ENCODE measurements at regions of chr12 and their contacts with region 1.

Region 1: DNA sequence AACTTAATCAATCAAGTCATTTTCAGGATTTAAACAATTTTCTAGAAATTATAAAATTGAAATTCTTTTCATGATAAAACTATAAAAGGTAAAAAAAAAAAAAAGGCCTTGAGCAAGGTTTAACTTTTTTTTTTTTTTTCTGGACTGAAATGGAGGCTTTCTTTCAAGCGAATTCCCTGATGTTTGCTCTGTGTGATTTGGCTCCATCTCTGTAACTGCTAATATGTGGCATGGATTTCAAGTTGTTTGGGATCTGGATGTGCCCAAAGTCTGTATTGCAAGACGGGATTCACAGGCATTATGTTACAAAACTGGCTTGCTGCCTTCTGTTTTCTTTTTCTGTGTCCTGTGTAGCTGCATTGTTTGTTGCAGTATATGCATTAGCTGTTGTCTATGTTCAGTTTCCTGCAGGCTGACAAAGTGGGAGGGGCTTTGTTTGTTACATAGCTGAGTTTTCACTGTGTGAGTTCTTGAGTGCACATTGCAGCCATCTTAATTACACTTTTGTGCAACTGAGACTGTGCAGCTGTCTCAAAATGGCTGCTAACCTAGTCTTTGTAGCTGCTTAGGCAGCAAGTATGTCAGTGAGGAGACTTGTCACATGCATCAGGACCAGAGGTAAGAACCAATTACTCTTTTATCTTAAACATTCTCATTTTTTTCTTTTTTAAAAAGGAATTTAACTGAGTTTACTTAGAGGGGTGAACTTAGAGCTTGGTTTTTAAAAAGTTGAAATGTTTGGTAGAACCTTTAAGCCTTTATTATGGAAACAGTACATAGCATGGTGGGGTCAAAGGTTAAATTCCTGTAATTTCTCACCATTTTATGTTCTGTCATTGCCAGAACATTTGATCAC is 19.5 kb downstream of the ATF7IP start:
- DNase-seq: peak; percentile 81
- H3K4me3 Mint-ChIP-seq: peak overlapping the region; percentile 75
- H3K27ac Mint-ChIP-seq: peak overlapping the region; percentile 98
- H3K4me1 Mint-ChIP-seq: peaks cover 55% of the 10 kb centered on the region
- H3K27me3 Mint-ChIP-seq: no peaks in the 10 kb centered on the region

Region 2: GRCh38 chr12:14257734-14258574 is 127.1 kb before region 1 on chr12:
- CTCF ChIA-PET with region 1: interaction called, 20 read pairs
- DNase-seq: peak; percentile 90
- H3K4me3 Mint-ChIP-seq: peak overlapping the region; percentile 64
- H3K27ac Mint-ChIP-seq: peak overlapping the region; percentile 99
- H3K4me1 Mint-ChIP-seq: peaks cover 51% of the 10 kb centered on the region
- H3K27me3 Mint-ChIP-seq: no peaks in the 10 kb centered on the region

Region 3: GRCh38 chr12:14365294-14366208 is 19.5 kb before region 1 on chr12 and contains the start of gene ATF7IP:
- CTCF ChIA-PET with region 1: interaction called, 49 read pairs
- DNase-seq: peak; percentile 97
- H3K4me3 Mint-ChIP-seq: peak within 1 kb of the TSS; percentile 81
- H3K27ac Mint-ChIP-seq: peak within 1 kb of the TSS; percentile 100
- H3K4me1 Mint-ChIP-seq: peaks cover 34% of the 10 kb centered on the region
- H3K27me3 Mint-ChIP-seq: no peaks in the 10 kb centered on the region

Region 4: DNA sequence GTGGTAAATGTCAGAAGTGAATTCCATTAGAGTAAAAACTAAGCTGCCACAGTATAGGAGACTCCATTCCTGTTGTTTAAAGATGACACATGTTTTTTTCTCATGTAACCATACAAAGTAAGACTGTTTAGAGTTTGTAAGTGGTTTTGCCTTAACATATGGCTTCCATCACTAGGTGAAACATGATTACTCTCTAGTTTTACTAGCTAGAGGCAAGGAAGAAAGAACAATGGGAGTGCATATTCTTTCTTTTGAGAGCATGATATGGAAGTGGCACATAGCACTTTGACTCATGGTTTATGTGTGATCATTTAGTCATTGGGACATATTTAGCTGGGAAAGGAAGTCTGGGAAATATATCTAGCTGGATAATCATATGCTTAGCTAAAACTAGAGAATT is 11.8 kb before region 1 on chr12:
- CTCF ChIA-PET with region 1: interaction called, 12 read pairs
- DNase-seq: no peak
- H3K4me3 Mint-ChIP-seq: no peak overlapping the region
- H3K27ac Mint-ChIP-seq: peak overlapping the region; percentile 43
- H3K4me1 Mint-ChIP-seq: peaks cover 59% of the 10 kb centered on the region
- H3K27me3 Mint-ChIP-seq: no peaks in the 10 kb centered on the region

Region 5: DNA sequence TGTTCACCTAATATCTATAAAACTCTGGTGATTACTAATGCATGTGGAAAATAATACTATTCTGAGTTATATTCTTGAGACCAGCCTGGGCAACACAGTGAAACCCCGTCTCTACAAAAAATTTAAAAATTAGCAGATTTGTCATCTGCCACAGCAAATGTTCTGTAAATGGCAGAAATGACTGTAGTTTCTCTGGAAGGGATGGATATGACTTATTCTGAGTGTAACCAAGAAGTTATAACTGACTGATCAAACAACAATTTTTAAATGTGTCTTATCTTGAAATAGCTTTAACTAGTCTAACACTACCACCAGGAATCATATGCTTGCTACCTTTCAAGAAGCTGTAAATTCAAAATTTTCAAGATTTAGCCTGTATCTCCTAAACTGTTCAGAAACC is 94.0 kb after region 1 on chr12:
- CTCF ChIA-PET with region 1: no interaction called
- DNase-seq: no peak
- H3K4me3 Mint-ChIP-seq: no peak overlapping the region
- H3K27ac Mint-ChIP-seq: no peak overlapping the region
- H3K4me1 Mint-ChIP-seq: no peaks in the 10 kb centered on the region
- H3K27me3 Mint-ChIP-seq: no peaks in the 10 kb centered on the region